Activated CD4-positive, alpha-beta memory T cell treated with anti-CD3 and anti-CD28 coated beads, Interleukin-2, amount 10 ng/mL, durations not matched to agents 7 days and 5 days (primary cell): ENCODE measurements at regions of chr7 and their contacts with region 1.

Region 1: DNA sequence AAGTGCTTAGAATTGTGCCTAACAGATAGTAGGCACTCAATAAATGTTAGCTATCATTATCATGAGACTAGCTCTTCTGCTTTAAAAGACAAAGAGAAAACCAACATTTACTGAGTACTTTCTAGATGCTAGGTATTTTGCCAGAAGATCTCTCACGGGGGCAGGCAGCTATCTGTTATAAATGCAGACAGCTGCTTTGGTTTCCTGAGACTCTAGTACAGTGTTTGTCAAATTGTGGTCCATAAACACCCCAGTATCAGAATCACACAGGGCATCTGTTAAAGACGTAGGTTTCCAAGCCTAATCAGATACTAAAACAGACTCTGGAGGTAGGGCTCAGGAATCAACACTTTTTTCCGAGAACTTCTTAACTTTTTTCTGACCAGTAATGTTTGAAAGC is 13.9 kb downstream of the FAM133B start:
- DNase-seq: no peak
- H3K4me3 Mint-ChIP-seq: no peak overlapping the region
- H3K27ac Mint-ChIP-seq: no peak overlapping the region
- H3K4me1 Mint-ChIP-seq: peaks cover 9% of the 10 kb centered on the region
- H3K27me3 Mint-ChIP-seq: no peaks in the 10 kb centered on the region

Region 2: GRCh38 chr7:92590711-92591310 is 14.5 kb after region 1 on chr7:
- CTCF ChIA-PET with region 1: interaction called, 12 read pairs
- POLR2A ChIA-PET with region 1: interaction called, 30 read pairs
- DNase-seq: no peak
- H3K4me3 Mint-ChIP-seq: peak overlapping the region; percentile 81
- H3K27ac Mint-ChIP-seq: no peak overlapping the region
- H3K4me1 Mint-ChIP-seq: peaks cover 42% of the 10 kb centered on the region
- H3K27me3 Mint-ChIP-seq: peaks cover 4% of the 10 kb centered on the region